Activated CD8-positive, alpha-beta memory T cell treated with anti-CD3 and anti-CD28 coated beads, Interleukin-2, amount 10 ng/mL, durations not matched to agents 7 days and 5 days (primary cell): ENCODE measurements at regions of chr12 and their contacts with region 1.

Region 1: GRCh38 chr12:94534774-94535509 is 75.3 kb upstream of the CEP83 start:
- DNase-seq: no peak
- ATAC-seq: peak; percentile 66
- H3K4me3 Mint-ChIP-seq: no peak overlapping the region
- H3K27ac Mint-ChIP-seq: peak overlapping the region; percentile 79
- H3K4me1 Mint-ChIP-seq: peaks cover 27% of the 10 kb centered on the region
- H3K27me3 Mint-ChIP-seq: peaks cover 2% of the 10 kb centered on the region

Region 2: DNA sequence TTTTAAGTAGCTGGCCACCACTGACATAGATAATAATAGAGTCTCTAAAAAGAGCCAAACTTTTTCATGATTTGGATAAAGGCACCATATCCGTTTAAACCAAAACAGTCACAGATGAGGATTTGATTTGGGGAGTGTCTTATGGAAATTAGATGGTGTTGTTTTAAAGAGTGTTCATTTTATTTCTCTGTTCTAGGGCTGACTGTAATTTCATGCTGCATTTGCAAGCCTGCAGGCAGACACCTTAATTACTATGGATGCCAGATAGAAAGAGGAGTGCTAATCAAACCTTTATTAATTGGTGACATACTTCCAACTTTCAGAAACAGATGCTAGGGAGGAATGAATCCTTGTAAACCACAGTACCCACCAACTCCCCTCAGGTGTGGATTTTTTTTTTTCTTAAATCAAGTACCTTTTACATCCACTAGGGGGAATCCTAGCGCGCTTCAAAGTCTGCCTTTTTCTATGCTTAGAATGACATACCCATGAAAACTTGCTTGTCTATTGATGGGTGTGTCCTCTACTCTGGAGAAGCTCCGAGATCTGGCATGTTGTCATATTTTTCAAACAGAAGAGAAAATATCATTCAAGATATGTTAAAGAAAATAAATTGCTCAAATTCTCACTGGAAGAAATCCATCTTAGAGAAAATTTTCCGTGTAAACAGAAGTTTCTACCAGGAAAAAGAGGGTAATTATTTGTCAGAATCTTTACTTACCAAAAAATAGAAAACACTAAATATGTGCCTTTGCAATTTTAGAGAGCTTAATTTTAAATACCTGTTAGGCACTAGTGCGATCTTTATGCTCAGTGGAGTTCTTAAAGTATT is 400.8 kb before region 1 on chr12:
- CTCF ChIA-PET with region 1: interaction called, 14 read pairs
- DNase-seq: no peak
- ATAC-seq: peak; percentile 61
- H3K4me3 Mint-ChIP-seq: no peak overlapping the region
- H3K27ac Mint-ChIP-seq: no peak overlapping the region
- H3K4me1 Mint-ChIP-seq: peaks cover 4% of the 10 kb centered on the region
- H3K27me3 Mint-ChIP-seq: peaks cover 25% of the 10 kb centered on the region

Region 3: DNA sequence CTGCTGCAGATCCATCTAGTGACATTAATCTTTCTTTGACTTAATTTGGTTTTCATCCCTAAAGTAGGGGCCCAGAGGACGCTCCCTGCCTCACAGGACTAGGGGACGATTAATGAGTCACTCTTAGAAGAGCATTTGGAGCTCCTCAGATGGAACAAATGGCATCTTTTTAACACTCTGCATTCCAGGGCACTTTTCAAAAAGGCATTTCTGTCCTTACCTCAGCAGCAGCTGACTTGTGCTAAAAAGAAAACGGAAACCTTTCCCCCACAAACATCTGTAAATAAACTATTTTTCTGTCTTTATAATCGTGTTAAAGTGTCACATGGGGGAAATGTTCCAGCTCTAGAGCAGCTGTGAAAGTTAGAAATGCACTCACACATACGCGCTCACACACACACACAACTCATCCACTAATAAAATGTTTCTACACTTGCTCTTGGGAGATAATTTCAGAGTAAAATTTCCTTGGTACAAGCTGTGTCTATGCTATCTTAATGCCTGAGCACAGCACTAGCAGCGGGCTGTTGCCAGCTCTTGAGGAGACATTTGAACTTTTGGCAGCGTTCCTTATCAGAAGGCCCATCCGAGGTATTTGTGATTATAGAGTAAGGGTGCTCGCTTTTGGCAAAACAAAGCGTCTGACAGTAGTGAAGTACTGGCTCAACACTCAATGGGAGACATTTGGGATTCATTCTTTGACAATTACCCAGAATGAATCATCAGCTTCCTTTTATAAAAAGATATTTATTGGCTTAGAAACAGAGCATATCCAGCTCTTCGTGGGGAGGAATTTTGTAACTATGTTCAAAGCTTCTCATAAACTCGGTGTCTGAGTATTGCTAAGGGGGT is 245.3 kb before region 1 on chr12:
- CTCF ChIA-PET with region 1: no interaction called
- DNase-seq: no peak
- ATAC-seq: no peak
- H3K4me3 Mint-ChIP-seq: no peak overlapping the region
- H3K27ac Mint-ChIP-seq: no peak overlapping the region
- H3K4me1 Mint-ChIP-seq: peaks cover 3% of the 10 kb centered on the region
- H3K27me3 Mint-ChIP-seq: no peaks in the 10 kb centered on the region